Right cardiac atrium (tissue), 5 donors: ENCODE measurements at regions of chr2 and their contacts with region 1.

Region 1: DNA sequence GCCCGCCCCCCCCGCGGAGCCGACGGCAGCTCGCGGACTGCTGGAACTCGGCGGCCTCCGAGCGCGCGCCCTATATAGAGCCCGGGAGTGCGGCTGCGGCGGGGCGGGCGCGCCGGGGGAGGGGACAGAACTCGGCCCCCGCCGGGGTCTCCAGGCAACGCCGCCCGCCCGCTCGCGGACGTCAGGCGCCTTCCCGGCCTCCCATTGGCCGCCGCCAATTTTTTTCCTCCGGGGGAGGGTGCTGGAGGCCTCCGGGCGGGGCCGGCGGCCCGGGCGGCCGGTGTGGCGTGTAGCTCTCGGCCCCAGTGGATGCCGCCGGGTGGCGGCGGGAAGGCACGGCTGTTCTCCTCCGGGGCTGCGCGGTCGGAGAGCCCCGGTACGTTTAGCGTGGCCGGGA is at the start of gene ZFP36L2:
- DNase-seq: peak; percentile 97 to 99 (median 99)
- ATAC-seq: peak; percentile 88 to 89
- H3K4me3 ChIP-seq: peak within 1 kb of the TSS; percentile 95
- H3K27ac ChIP-seq: peak within 1 kb of the TSS; percentile 99
- H3K4me1 ChIP-seq: peaks cover 4% of the 10 kb centered on the region
- H3K27me3 ChIP-seq: no peaks in the 10 kb centered on the region
- total RNA-seq, gene ZFP36L2: 62.1 to 73.0 (median 68.1) TPM

Region 2: GRCh38 chr2:42859006-42859552 is 367.5 kb before region 1 on chr2:
- intact Hi-C with region 1: loop called in 1 of 4 experiments (anchors 10 kb)
- DNase-seq: no peak
- ATAC-seq: no peak
- H3K4me3 ChIP-seq: no peak overlapping the region
- H3K27ac ChIP-seq: no peak overlapping the region
- H3K4me1 ChIP-seq: peaks cover 6% of the 10 kb centered on the region
- H3K27me3 ChIP-seq: no peaks in the 10 kb centered on the region

Region 3: DNA sequence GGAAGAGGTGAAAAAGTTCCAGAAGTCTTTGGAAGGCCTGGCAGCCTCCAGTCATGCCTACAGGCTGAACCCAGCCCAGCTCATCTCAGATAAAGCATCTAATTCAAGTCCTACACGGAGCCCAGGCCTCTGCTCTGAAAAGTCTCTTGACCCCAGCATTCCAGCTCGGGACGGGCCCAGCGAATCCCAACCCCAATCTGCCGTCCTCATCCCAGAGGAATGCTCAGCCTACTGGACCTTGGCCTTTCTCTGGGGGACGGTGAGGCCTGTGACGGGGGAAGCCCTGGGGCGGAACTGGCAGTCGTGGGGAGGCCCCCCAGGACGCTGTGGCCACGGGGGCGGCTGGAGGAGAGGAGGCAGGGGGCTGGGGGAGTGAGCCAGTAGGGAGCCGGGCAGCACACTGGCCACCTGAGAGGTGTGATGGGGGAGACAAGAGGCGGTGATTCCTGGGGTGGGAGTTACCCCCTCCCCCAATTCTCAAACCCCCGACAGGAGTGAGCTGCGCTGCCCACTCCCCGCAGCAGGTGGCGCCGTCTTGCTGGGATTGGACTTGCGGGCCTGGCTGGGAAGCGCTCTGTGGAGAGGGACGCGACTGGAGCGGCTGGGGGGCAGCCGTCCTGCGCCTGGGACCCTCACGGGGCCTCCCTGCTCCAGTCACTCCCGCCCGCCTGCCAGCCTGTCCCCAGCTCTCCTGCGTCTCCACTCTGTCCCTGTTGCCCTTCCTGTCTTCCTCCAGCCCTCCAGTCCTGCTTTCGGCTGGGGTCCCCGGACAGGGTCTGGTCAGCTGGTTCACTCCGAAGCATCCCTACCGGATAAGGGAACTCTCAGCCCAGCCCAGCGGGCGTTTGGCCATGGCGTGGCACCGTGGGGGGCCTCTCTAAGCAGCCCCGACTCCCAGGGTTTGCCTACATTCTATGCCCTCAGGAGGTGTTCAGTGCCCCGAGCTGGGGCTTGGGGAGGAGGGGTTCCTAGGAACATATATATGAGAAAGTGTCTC is 251.5 kb before region 1 on chr2:
- intact Hi-C with region 1: loop called (anchors 5 kb)
- DNase-seq: peak; percentile 81 to 94 (median 93)
- ATAC-seq: peak; percentile 87
- H3K4me3 ChIP-seq: peak overlapping the region; percentile 33
- H3K27ac ChIP-seq: no peak overlapping the region
- H3K4me1 ChIP-seq: no peaks in the 10 kb centered on the region
- H3K27me3 ChIP-seq: no peaks in the 10 kb centered on the region

Region 4: GRCh38 chr2:43032213-43033015 is 194.1 kb before region 1 on chr2:
- intact Hi-C with region 1: loop called in 2 of 4 experiments (anchors 5 kb)
- DNase-seq: peak; percentile 77 to 92 (median 89)
- ATAC-seq: peak; percentile 84 to 88
- H3K4me3 ChIP-seq: no peak overlapping the region
- H3K27ac ChIP-seq: peak overlapping the region; percentile 80
- H3K4me1 ChIP-seq: peaks cover 8% of the 10 kb centered on the region
- H3K27me3 ChIP-seq: no peaks in the 10 kb centered on the region

Region 5: GRCh38 chr2:43131024-43131889 is 95.3 kb before region 1 on chr2:
- intact Hi-C with region 1: loop called in 3 of 4 experiments (anchors 5 kb)
- DNase-seq: peak; percentile 63 to 87 (median 78)
- ATAC-seq: peak; percentile 42 to 58
- H3K4me3 ChIP-seq: no peak overlapping the region
- H3K27ac ChIP-seq: peak overlapping the region; percentile 3
- H3K4me1 ChIP-seq: peaks cover 14% of the 10 kb centered on the region
- H3K27me3 ChIP-seq: no peaks in the 10 kb centered on the region

Region 6: DNA sequence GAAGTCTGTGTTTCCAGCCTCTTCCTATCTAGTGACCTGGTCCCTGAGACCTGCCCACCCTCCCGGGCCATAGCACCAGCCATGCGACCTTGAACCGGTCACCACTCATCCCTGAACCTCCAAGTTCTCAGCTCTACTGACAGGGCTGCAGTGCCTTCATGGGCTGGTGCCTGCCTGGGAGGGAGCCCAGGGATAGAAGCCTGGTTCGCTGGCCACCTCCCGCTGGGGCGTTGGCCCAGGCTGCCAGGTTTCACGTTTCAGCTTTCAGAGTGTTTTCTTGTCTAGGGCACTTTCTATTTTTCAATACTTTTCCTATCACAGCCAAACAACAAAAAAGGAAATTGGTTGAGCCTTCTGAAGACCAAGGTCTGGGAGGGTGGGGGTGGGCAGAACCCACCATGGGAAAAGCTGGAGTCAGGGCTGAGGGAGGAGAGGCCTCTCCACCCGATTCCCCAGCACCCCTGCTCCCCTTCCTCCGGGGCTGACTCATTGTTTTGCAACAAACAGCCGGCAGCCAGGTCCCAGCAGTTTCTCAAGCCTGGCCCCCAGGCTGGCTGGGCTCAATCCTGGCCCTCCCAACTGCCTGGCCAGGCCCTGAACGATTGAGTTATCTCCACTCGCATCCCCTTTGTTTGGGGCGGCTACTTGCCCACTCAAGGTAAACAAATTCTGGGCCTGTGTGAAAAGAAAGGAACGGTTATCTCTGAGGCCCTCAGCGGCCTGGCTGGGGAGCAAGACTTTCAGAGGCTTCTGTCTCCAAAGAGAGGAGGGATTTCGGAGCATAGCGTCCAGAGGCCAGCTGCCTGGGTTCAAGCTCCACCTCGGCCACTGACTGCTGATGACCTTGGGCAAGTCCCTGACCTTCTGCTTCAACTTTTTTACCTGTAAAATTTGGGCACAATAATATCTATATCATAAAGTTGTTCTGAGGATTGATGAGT is 47.7 kb before region 1 on chr2:
- intact Hi-C with region 1: loop called in 1 of 4 experiments (anchors 5 kb)
- DNase-seq: peak; percentile 82 to 92 (median 89)
- ATAC-seq: peak; percentile 89 to 92
- H3K4me3 ChIP-seq: no peak overlapping the region
- H3K27ac ChIP-seq: peak overlapping the region; percentile 54
- H3K4me1 ChIP-seq: peaks cover 8% of the 10 kb centered on the region
- H3K27me3 ChIP-seq: no peaks in the 10 kb centered on the region

Region 7: GRCh38 chr2:43318791-43319190 is 92.2 kb after region 1 on chr2:
- intact Hi-C with region 1: no loop called
- DNase-seq: no peak
- ATAC-seq: no peak
- H3K4me3 ChIP-seq: no peak overlapping the region
- H3K27ac ChIP-seq: no peak overlapping the region
- H3K4me1 ChIP-seq: peaks cover 2% of the 10 kb centered on the region
- H3K27me3 ChIP-seq: no peaks in the 10 kb centered on the region